HEK293 (cell line): ENCODE measurements at regions of chr15 and their contacts with region 1.

Region 1: GRCh38 chr15:95291898-95292472 is 1038.5 kb upstream of the NR2F2 start:
- H3K4me3 ChIP-seq: no peak overlapping the region
- H3K27ac ChIP-seq: no peak overlapping the region
- H3K4me1 ChIP-seq: peaks cover 3% of the 10 kb centered on the region
- CTCF ChIP-seq: no peak

Region 2: GRCh38 chr15:95259513-95259912 is 32.5 kb before region 1 on chr15:
- CTCF ChIA-PET with region 1: interaction called, 22 read pairs
- POLR2A ChIA-PET with region 1: no interaction called
- H3K4me3 ChIP-seq: no peak overlapping the region
- H3K27ac ChIP-seq: no peak overlapping the region; the same call in 1 of the 2 replicates
- H3K4me1 ChIP-seq: 0 out of 2 replicates have a peak, but pooled peaks cover 4% of the 10 kb centered on the region
- CTCF ChIP-seq: peak; percentile 80